H1 (cell line): ENCODE measurements at regions of chr1 and their contacts with region 1.

Region 1: DNA sequence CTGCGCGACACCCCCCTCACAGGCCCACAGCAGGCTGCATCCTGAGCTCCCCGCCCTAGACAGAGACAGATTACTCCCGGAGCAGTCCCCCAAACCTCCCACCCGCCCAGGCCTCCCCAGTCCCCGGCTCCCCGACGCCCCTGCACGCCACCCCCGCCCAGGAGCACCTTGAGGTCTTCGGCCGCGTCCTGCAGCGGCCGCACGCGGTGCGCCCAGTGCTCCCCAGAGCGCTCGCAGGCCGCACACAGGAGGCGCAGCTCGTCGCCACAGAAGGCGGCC is 709 bp downstream of the TRIM11 start:
- DNase-seq: no peak
- H3K4me3 ChIP-seq: peak overlapping the region; percentile 84 to 100 (median 92)
- H3K27ac ChIP-seq: peak overlapping the region; percentile 79; the same call in 1 of the 2 replicates
- H3K4me1 ChIP-seq: peaks cover 3 to 11% (median 8%) of the 10 kb centered on the region in 4 experiments
- H3K27me3 ChIP-seq: 0 out of 7 replicates have a peak, but pooled peaks cover 0 to 2% (median 0%) of the 10 kb centered on the region in 4 experiments
- CTCF ChIP-seq: no peak
- EP300 ChIP-seq: no peak
- POLR2A ChIP-seq: no peak
- RAD21 ChIP-seq: no peak

Region 2: GRCh38 chr1:228316948-228317828 is 88.7 kb before region 1 on chr1:
- CTCF ChIA-PET with region 1: no interaction called
- POLR2A ChIA-PET with region 1: no interaction called
- DNase-seq: no peak
- H3K4me3 ChIP-seq: no peak overlapping the region
- H3K27ac ChIP-seq: no peak overlapping the region
- H3K4me1 ChIP-seq: no peaks in the 10 kb centered on the region
- H3K27me3 ChIP-seq: no peaks in the 10 kb centered on the region
- CTCF ChIP-seq: no peak
- EP300 ChIP-seq: no peak
- POLR2A ChIP-seq: no peak
- RAD21 ChIP-seq: no peak

Region 3: DNA sequence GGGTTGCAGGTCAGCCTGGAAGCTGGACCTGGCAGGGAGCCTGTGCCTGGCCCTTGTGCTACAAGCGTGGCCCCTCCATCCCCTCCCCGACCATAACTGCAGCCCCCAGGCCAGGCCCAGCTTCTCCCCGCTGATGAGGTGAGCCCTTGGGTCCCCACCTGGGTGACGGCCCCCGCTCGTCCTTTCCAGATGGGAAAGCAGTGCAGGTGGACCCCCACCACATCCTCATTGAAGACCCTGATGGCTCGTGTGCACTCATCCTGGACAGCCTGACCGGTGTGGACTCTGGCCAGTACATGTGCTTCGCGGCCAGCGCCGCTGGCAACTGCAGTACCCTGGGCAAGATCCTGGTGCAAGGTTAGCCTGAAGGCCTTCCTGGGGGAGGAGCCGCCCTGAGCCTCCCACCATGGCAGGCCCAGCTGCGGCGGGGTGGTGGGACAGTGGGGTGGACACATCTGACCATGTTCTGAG is 56.2 kb before region 1 on chr1:
- CTCF ChIA-PET with region 1: no interaction called
- POLR2A ChIA-PET with region 1: no interaction called
- DNase-seq: no peak
- H3K4me3 ChIP-seq: no peak overlapping the region
- H3K27ac ChIP-seq: no peak overlapping the region
- H3K4me1 ChIP-seq: no peaks in the 10 kb centered on the region
- H3K27me3 ChIP-seq: no peaks in the 10 kb centered on the region
- CTCF ChIP-seq: no peak
- EP300 ChIP-seq: no peak
- POLR2A ChIP-seq: no peak
- RAD21 ChIP-seq: no peak

Region 4: DNA sequence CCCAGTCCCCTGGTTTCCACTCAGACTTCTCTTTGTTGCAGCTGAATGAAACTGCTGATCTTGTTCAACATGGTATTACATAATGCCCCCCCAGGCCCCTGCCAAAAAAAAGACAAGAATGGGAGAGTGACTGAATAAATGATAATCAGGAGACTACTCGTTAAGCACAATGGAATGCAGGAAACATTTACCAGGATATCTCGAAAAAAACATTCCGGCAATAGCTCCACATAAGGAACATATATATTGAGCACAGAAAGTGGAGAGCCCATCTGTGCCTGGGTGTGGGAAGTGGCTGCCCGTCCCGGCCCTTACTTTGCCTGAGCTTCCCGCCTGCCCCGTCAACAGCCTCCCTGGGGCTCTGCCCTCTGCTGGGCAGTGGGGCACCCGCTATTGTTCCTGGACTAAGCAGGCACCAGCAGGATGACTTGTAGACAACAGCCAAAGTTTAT is 12.7 kb before region 1 on chr1:
- CTCF ChIA-PET with region 1: interaction called, 21 read pairs
- POLR2A ChIA-PET with region 1: interaction called, 31 read pairs
- DNase-seq: no peak
- H3K4me3 ChIP-seq: no peak overlapping the region
- H3K27ac ChIP-seq: no peak overlapping the region
- H3K4me1 ChIP-seq: no peaks in the 10 kb centered on the region
- H3K27me3 ChIP-seq: no peaks in the 10 kb centered on the region
- CTCF ChIP-seq: peak; percentile 42 to 44 (median 43)
- EP300 ChIP-seq: no peak
- POLR2A ChIP-seq: no peak
- RAD21 ChIP-seq: peak; percentile 31 to 50

Region 5: DNA sequence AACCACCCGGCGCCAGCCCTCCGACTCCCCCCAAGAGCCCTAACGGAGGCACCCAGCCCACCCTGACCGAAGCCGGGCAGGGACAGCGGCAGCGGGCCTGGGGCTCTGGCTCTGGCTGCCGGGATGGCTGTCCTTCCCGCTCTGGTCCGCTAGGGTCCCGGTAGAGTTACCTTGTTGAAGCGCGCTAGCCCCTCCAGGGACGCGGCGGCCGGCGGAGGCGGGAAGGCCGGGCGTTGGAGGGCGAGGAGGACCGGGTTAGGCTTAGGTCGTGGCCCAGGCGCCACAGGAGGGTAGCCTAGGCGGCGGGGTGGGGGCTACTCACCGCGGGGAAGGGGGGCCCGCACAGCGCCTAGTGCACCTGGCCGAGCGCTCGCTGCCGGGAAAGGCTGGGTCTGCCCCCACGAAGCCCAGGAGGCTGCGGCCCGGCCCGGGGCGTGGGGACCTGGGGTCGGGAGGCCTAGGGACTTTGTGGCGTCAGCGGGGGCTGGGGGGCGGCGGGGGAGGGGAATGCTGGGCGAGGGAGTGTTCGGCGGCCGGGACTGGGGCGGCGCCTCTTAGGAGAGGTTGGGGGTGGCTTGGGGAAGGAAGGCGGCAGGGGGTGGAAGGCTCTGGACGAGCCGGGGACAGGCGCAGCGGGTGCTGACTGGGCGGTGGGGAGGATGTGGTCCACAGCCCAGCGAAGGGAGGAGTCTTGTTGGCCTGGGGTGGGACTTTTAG is 10.4 kb after region 1 on chr1 and contains the start of gene TRIM17:
- CTCF ChIA-PET with region 1: interaction called, 4 read pairs
- POLR2A ChIA-PET with region 1: interaction called, 21 read pairs
- DNase-seq: peak in 1 of 2 experiments; percentile 89
- H3K4me3 ChIP-seq: peak within 1 kb of the TSS; percentile 30 to 60 (median 58)
- H3K27ac ChIP-seq: no peak within 1 kb of the TSS
- H3K4me1 ChIP-seq: peaks cover 2 to 9% (median 6%) of the 10 kb centered on the region in 4 experiments
- H3K27me3 ChIP-seq: peaks cover 3 to 64% (median 35%) of the 10 kb centered on the region in 4 experiments
- CTCF ChIP-seq: peak; percentile 55 to 63 (median 56)
- EP300 ChIP-seq: no peak
- POLR2A ChIP-seq: no peak
- RAD21 ChIP-seq: peak; percentile 33 to 46; a peak in 2 of 4 replicates
- total RNA-seq, gene TRIM17: 2.2 and 2.3 TPM in 2 replicates

Region 6: DNA sequence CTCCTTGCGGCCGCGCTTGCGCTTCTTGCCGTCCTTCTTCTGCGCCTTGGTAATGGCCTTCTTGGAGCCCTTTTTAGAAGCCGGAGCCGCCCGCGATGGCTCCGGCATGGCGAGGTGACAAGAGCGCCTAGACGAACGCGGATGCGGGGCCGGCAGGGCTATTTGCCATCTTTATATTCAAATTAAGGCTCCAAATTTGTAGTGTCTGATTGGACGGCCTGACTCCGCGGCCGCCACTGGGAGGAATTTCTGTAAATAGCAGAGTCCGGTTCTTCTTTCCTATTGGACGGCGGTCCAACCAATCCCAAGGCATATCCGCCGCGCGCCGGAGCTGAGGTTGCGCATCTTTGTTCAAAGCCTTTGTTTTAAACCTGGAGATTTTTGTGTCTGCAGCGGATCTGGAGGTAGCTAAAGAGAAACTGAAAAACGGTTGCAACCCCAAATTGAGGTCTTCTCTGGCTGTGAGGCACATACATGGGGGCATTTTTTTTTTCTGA is 58.6 kb after region 1 on chr1:
- CTCF ChIA-PET with region 1: no interaction called
- POLR2A ChIA-PET with region 1: interaction called, 62 read pairs
- DNase-seq: peak in 1 of 2 experiments; percentile 84
- H3K4me3 ChIP-seq: peak overlapping the region; percentile 57 to 77 (median 69)
- H3K27ac ChIP-seq: no peak overlapping the region
- H3K4me1 ChIP-seq: peaks cover 0 to 20% (median 5%) of the 10 kb centered on the region in 4 experiments; a peak in 5 of 7 replicates
- H3K27me3 ChIP-seq: peaks cover 4 to 44% (median 26%) of the 10 kb centered on the region in 4 experiments
- CTCF ChIP-seq: no peak; a peak in 1 of 4 replicates
- EP300 ChIP-seq: no peak
- POLR2A ChIP-seq: peak in 1 of 2 experiments; percentile 41; a peak in 1 of 3 replicates
- RAD21 ChIP-seq: no peak

Region 7: GRCh38 chr1:228471762-228472398 is 66.0 kb after region 1 on chr1:
- CTCF ChIA-PET with region 1: interaction called, 5 read pairs
- POLR2A ChIA-PET with region 1: interaction called, 11 read pairs
- DNase-seq: no peak
- H3K4me3 ChIP-seq: no peak overlapping the region
- H3K27ac ChIP-seq: no peak overlapping the region
- H3K4me1 ChIP-seq: peaks cover 3 to 22% (median 15%) of the 10 kb centered on the region in 4 experiments; a peak in 6 of 7 replicates
- H3K27me3 ChIP-seq: peaks cover 2 to 28% (median 15%) of the 10 kb centered on the region in 4 experiments
- CTCF ChIP-seq: peak in 2 of 3 experiments; percentile 64 to 68; a peak in 3 of 4 replicates
- EP300 ChIP-seq: no peak
- POLR2A ChIP-seq: no peak
- RAD21 ChIP-seq: peak; percentile 50 to 70